ENCODE measurements at regions of chr5 and their contacts with region 1.

Region 1: DNA sequence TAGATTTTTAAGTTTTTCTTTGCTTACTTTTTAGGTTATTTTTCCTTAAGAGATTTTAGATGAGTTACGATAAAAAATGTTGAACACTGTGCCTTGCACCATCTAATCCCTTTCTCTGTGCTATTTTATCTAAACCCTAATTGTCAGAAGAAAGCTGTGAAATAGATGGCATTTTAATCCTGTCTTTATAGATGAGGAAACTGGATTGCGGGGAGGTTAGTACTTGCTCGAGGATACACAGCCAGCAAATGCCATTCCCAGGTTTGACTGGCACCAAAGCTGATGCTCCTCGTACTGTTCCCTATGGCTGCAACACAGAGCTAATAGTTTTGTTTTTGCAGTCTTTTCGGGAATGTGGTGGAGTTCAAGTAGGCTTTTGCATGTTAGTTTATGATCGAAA is 82.7 kb downstream of the ZSWIM6 start:
- DNase-seq: no peak
- H3K27ac ChIP-seq: no peak overlapping the region
- CTCF ChIP-seq: no peak

Region 2: GRCh38 chr5:61215996-61216395 is 198.8 kb before region 1 on chr5:
- CTCF ChIA-PET with region 1: no interaction called
- POLR2A ChIA-PET with region 1: no interaction called
- DNase-seq: no peak
- H3K27ac ChIP-seq: no peak overlapping the region
- CTCF ChIP-seq: no peak

Region 3: GRCh38 chr5:61449804-61450492 is 35.1 kb after region 1 on chr5:
- CTCF ChIA-PET with region 1: no interaction called
- POLR2A ChIA-PET with region 1: interaction called, 10 read pairs
- DNase-seq: peak; percentile 86
- H3K27ac ChIP-seq: no peak overlapping the region
- CTCF ChIP-seq: no peak

Region 4: DNA sequence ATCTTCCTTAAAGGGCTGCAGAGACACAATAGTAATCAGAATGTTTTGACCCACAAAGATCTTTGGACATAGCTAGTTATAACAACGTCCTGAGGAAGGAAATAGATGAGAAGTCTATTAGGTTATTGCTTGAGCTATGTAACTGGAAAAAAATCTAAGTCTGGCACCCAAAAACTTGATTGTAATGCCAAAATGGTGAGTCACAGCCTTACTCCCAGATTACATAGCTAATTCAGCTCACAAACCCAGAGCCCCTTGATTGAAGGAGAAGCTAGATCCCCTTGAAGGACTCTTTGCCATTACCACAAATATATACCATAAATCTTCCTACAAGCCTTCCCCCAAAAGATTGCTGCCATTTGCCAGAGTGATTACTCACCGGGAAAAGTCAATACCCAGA is 549.4 kb after region 1 on chr5:
- CTCF ChIA-PET with region 1: no interaction called
- POLR2A ChIA-PET with region 1: no interaction called
- DNase-seq: peak; percentile 27
- H3K27ac ChIP-seq: no peak overlapping the region
- CTCF ChIP-seq: no peak